RWPE1 (cell line): ENCODE measurements at regions of chr10 and their contacts with region 1.

Region 1: GRCh38 chr10:121764233-121764942 is 163.4 kb downstream of the ATE1 start:
- DNase-seq: no peak
- H3K27ac ChIP-seq: no peak overlapping the region
- CTCF ChIP-seq: no peak

Region 2: GRCh38 chr10:121787169-121787568 is 22.8 kb after region 1 on chr10:
- CTCF ChIA-PET with region 1: no interaction called
- POLR2A ChIA-PET with region 1: interaction called, 14 read pairs
- DNase-seq: no peak
- H3K27ac ChIP-seq: no peak overlapping the region
- CTCF ChIP-seq: no peak